GM12878 (cell line): ENCODE measurements at regions of chr4 and their contacts with region 1.

Region 1: DNA sequence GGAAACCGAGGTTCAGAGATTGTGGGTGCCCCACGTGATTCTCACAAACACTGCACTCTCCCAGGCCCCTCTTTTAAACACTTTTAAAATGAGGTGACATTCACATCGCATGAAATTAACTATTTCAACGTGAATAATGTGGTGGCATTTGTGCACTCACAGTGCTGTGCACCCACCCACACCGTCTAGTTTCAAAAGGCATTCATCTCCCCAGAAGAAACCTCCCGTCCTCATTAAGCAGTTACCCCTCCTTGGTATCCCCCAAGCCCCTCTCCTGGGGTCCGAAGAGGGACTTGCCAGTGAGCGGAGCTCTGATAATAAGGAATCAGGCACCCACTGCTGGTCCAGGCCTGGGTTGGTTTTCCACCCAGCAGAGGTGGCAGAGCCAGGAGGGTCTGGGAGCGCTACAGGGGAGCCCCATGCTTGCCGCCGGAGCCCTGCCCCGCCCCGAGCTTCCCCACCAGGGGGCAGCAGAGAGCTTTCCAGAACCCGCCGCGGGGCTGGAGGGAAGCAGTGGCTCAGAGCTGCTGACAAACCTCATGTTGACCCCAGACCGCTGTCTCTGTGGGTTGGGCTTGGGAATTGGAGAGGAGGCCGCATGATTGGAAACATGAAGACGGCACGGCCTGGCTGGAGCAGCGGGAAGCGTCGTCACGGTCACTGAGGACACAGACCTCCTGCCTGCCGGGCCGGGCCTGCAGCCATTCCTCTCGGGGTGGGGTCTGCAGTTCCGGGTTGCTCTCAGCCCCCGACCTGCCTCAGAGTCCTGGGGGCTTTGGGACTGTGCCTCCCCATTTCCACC is 27.5 kb upstream of the HTRA3 start:
- DNase-seq: no peak
- ATAC-seq: peak; percentile 85
- H3K4me3 ChIP-seq: no peak overlapping the region
- H3K27ac ChIP-seq: no peak overlapping the region
- H3K4me1 ChIP-seq: peaks cover 3% of the 10 kb centered on the region
- H3K27me3 ChIP-seq: no peaks in the 10 kb centered on the region
- CTCF ChIP-seq: peak; percentile 91 to 96 (median 92)
- EP300 ChIP-seq: no peak
- POLR2A ChIP-seq: 0 out of 2 replicates have a peak, but pooled peaks have one; percentile 20
- RAD21 ChIP-seq: peak; percentile 77

Region 2: GRCh38 chr4:6641164-6641970 is 1600.7 kb before region 1 on chr4:
- CTCF ChIA-PET with region 1: no interaction called
- POLR2A ChIA-PET with region 1: no interaction called
- RAD21 ChIA-PET with region 1: no interaction called
- SMC1A ChIA-PET with region 1: no interaction called
- in situ Hi-C with region 1: no loop called
- intact Hi-C with region 1: no loop called
- DNase-seq: no peak
- ATAC-seq: peak; percentile 72
- H3K4me3 ChIP-seq: peak overlapping the region; percentile 80
- H3K27ac ChIP-seq: peak overlapping the region; percentile 87
- H3K4me1 ChIP-seq: peaks cover 7% of the 10 kb centered on the region
- H3K27me3 ChIP-seq: no peaks in the 10 kb centered on the region
- CTCF ChIP-seq: no peak
- EP300 ChIP-seq: 0 out of 4 replicates have a peak, but pooled peaks of 1 of the 2 experiments have one; percentile 8
- POLR2A ChIP-seq: peak; percentile 48
- RAD21 ChIP-seq: no peak

Region 3: GRCh38 chr4:8221476-8221875 is 20.6 kb before region 1 on chr4:
- CTCF ChIA-PET with region 1: interaction called, 12 read pairs
- POLR2A ChIA-PET with region 1: no interaction called
- RAD21 ChIA-PET with region 1: no interaction called
- SMC1A ChIA-PET with region 1: interaction called, 3 read pairs
- in situ Hi-C with region 1: no loop called
- intact Hi-C with region 1: no loop called
- DNase-seq: peak; percentile 46
- ATAC-seq: peak; percentile 91
- H3K4me3 ChIP-seq: no peak overlapping the region
- H3K27ac ChIP-seq: peak overlapping the region; percentile 67; the same call in 1 of the 2 replicates
- H3K4me1 ChIP-seq: peaks cover 11% of the 10 kb centered on the region
- H3K27me3 ChIP-seq: no peaks in the 10 kb centered on the region
- CTCF ChIP-seq: no peak
- EP300 ChIP-seq: peak; percentile 79 to 87; a peak in 3 of 4 replicates
- POLR2A ChIP-seq: no peak
- RAD21 ChIP-seq: no peak

Region 4: DNA sequence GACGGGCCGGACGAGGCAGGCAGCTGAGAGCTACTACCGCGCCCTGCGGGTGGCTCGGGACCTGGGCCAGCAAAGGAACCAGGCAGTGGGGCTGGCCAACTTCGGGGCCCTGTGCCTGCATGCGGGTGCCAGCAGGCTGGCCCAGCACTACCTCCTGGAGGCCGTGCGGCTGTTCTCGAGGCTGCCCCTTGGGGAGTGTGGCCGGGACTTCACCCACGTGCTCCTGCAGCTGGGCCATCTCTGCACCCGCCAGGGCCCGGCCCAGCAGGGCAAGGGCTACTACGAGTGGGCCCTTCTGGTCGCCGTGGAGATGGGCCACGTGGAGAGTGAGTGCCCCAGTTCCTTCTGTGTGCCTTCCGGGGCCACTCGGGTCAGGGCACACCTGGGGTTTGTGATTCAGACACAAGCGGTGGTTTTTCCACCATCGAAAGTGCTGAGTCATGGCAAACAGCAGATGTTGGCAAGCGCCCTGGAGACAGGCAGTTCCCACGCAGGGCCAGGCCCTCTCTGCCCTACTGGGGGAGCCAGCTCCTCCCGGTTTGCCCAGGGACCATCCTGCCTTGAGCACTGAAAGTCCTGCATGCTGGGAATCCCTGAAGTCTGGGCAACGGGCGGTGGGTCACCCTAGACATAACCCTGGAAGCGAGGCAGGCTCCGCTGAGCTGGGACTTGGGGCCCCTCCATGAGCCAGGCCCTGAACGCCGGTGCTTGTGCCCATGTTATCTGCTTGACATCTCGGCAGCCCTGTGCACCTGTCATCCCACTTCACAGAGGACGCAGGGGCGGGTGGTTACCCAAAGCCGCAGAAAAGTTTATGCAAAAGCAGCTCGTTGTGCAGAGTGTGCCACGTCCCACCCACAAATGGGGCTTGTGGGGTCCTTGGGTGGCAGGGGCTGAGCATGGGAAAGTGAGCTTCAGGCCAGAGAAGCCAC is 13.5 kb before region 1 on chr4:
- CTCF ChIA-PET with region 1: interaction called, 10 read pairs
- POLR2A ChIA-PET with region 1: no interaction called
- RAD21 ChIA-PET with region 1: interaction called, 6 read pairs
- SMC1A ChIA-PET with region 1: interaction called, 4 read pairs
- in situ Hi-C with region 1: no loop called
- intact Hi-C with region 1: no loop called
- DNase-seq: peak; percentile 76
- ATAC-seq: peak; percentile 88
- H3K4me3 ChIP-seq: no peak overlapping the region
- H3K27ac ChIP-seq: peak overlapping the region; percentile 83
- H3K4me1 ChIP-seq: peaks cover 29% of the 10 kb centered on the region
- H3K27me3 ChIP-seq: no peaks in the 10 kb centered on the region
- CTCF ChIP-seq: peak in 1 of 3 experiments; percentile 21; a peak in 1 of 6 replicates
- EP300 ChIP-seq: peak; percentile 62 to 78; a peak in 3 of 4 replicates
- POLR2A ChIP-seq: peak; percentile 45
- RAD21 ChIP-seq: no peak